H1 (cell line): ENCODE measurements at regions of chr9 and their contacts with region 1.

Region 1: DNA sequence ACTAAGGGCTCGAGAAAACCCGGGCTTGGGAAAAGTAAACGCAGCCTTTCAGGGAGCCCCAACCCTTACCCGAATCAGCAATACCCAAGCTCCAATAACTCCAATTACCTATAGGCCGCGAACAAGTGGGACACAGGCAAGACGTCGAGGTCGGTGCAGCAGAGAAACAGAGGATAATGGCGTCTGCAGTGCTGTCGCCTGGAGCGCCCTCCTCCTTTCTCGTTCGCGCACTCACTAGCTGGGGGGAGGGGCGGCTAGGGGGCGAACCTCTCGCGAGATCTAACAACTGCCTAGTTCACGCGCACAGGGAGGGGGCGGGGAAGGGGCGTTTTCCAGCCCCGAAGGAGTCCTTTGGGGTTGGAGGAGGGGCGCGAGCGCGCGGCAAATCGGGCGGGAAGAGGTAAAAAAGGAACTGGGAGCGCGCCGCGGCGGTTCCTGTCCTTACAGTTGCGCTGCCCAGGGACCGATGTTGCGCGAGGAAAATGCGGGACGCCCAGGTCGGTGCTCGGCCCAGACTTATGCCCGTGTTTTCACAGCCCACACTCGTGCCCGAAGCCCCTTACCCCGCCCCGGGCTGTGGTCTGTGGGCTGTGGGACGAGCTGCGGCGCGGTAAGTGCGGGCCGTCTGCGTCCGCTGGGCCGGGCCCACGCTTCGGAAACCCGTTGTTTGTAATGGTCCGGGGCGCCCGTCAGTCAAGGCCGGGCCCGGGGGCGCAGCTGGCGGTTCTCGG is at the start of gene RMI1:
- DNase-seq: peak; percentile 94 to 95
- H3K4me3 ChIP-seq: peak within 1 kb of the TSS; percentile 74 to 99 (median 97)
- H3K27ac ChIP-seq: peak within 1 kb of the TSS; percentile 100
- H3K4me1 ChIP-seq: peaks cover 0 to 2% (median 0%) of the 10 kb centered on the region in 4 experiments; a peak in 2 of 7 replicates
- H3K27me3 ChIP-seq: no peaks in the 10 kb centered on the region
- CTCF ChIP-seq: no peak
- EP300 ChIP-seq: peak in 1 of 2 experiments; percentile 58; a peak in 1 of 3 replicates
- POLR2A ChIP-seq: peak; percentile 75 to 94
- RAD21 ChIP-seq: peak in 1 of 2 experiments; percentile 11; a peak in 1 of 4 replicates
- total RNA-seq, gene RMI1: 34.1 and 34.6 TPM in 2 replicates

Region 2: DNA sequence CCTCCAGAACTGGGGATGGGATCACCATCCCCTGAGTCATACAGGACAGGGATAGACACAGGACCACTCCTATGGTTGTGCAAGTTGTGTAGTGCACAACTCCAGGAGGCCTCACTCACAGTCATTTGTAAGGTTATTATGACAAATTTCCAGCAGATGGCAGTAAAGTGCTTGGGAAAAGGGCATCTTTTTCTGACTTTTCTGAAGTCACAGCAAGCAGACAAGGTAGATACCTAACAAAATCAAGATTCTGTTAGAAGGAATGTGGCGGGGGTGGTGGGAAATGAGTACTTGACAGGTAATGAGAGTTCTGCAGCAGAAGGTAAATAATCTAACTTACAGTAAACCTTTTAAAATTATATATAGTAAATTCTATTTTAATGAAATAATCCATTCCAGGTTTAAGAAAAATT is 42.6 kb before region 1 on chr9:
- CTCF ChIA-PET with region 1: no interaction called
- POLR2A ChIA-PET with region 1: interaction called, 17 read pairs
- DNase-seq: peak in 1 of 2 experiments; percentile 47
- H3K4me3 ChIP-seq: no peak overlapping the region
- H3K27ac ChIP-seq: no peak overlapping the region
- H3K4me1 ChIP-seq: peaks cover 0 to 6% (median 2%) of the 10 kb centered on the region in 4 experiments; a peak in 4 of 7 replicates
- H3K27me3 ChIP-seq: no peaks in the 10 kb centered on the region
- CTCF ChIP-seq: peak in 2 of 3 experiments; percentile 66 to 72; a peak in 3 of 4 replicates
- EP300 ChIP-seq: no peak
- POLR2A ChIP-seq: no peak
- RAD21 ChIP-seq: peak; percentile 85 to 94

Region 3: GRCh38 chr9:83965350-83966208 is 15.0 kb before region 1 on chr9:
- CTCF ChIA-PET with region 1: interaction called, 5 read pairs
- POLR2A ChIA-PET with region 1: interaction called, 269 read pairs
- DNase-seq: no peak
- H3K4me3 ChIP-seq: no peak overlapping the region
- H3K27ac ChIP-seq: no peak overlapping the region
- H3K4me1 ChIP-seq: no peaks in the 10 kb centered on the region
- H3K27me3 ChIP-seq: no peaks in the 10 kb centered on the region
- CTCF ChIP-seq: no peak
- EP300 ChIP-seq: no peak
- POLR2A ChIP-seq: peak in 1 of 2 experiments; percentile 73; a peak in 2 of 3 replicates
- RAD21 ChIP-seq: no peak

Region 4: DNA sequence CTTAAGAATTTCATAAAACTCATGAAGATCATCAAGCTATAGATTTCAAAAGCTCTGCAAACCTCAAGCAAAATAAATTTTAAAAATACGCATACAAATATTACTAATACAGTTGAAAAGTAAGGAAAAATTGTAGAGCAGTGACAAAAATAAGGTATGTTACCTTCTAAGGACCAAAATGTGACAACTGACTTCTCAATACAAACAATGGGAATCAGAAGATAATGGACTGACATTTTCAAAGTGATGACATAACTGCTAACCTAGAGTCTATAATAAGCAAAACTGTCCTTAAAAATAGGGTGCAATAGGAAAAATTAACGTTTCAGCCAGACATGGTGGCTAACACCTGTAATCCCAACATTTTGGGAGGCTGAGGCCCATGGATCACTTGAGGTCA is 27.1 kb after region 1 on chr9:
- CTCF ChIA-PET with region 1: interaction called, 3 read pairs
- POLR2A ChIA-PET with region 1: interaction called, 22 read pairs
- DNase-seq: no peak
- H3K4me3 ChIP-seq: no peak overlapping the region
- H3K27ac ChIP-seq: no peak overlapping the region
- H3K4me1 ChIP-seq: no peaks in the 10 kb centered on the region
- H3K27me3 ChIP-seq: no peaks in the 10 kb centered on the region
- CTCF ChIP-seq: no peak
- EP300 ChIP-seq: no peak
- POLR2A ChIP-seq: no peak
- RAD21 ChIP-seq: no peak